Activated naive CD4-positive, alpha-beta T cell treated with anti-CD3 and anti-CD28 coated beads for 36 hours (primary cell): ENCODE measurements at regions of chr10 and their contacts with region 1.

Region 1: GRCh38 chr10:129971381-129972144 is 7.5 kb upstream of the EBF3 start:
- DNase-seq: peak; percentile 62
- H3K4me3 Mint-ChIP-seq: peak overlapping the region; percentile 52
- H3K27ac Mint-ChIP-seq: no peak overlapping the region
- H3K4me1 Mint-ChIP-seq: peaks cover 21% of the 10 kb centered on the region
- H3K27me3 Mint-ChIP-seq: peaks cover 66% of the 10 kb centered on the region

Region 2: DNA sequence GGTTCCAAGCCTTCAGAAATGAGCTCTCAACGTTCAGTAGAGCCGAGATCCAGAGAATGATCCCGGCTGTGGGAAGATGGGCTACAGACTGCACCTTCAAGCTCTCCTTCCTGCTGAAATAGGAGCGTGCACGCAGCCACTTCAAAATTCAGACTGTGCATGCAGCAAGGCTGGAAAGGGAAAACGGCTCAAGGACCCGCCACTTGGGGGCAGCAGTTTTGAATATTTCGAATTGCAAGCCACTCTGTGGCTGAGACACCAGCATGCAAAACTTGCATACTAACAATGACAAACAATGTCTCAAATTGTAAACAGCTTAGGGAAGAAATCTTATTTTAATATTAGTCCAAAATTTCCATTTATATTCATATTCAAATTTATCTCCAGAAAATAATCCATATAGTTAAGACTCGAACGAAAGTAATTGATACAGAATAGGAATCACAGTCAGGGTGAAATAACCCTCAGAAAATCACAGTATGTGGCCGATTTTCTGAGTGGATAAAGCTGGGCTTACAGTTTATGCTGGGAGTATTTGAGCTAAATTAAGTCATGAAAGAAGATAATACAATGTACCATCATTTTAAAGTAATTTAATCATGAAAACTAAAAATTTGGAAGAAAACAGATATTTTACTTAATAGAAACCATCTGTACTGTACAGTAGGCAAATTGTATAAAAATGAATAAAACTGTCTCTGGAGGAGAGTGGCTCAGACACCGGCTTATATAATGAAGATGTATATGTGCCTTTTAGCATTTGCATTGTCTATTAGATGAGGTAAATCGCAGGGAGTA is 1707.5 kb before region 1 on chr10:
- CTCF ChIA-PET with region 1: no interaction called
- intact Hi-C with region 1: loop called (anchors 5 kb)
- DNase-seq: peak; percentile 74
- H3K4me3 Mint-ChIP-seq: no peak overlapping the region
- H3K27ac Mint-ChIP-seq: no peak overlapping the region
- H3K4me1 Mint-ChIP-seq: no peaks in the 10 kb centered on the region
- H3K27me3 Mint-ChIP-seq: peaks cover 30% of the 10 kb centered on the region

Region 3: GRCh38 chr10:129877773-129878371 is 93.7 kb before region 1 on chr10:
- CTCF ChIA-PET with region 1: interaction called, 3 read pairs
- intact Hi-C with region 1: loop called (anchors 5 kb)
- DNase-seq: peak; percentile 61
- H3K4me3 Mint-ChIP-seq: no peak overlapping the region
- H3K27ac Mint-ChIP-seq: no peak overlapping the region
- H3K4me1 Mint-ChIP-seq: no peaks in the 10 kb centered on the region
- H3K27me3 Mint-ChIP-seq: no peaks in the 10 kb centered on the region

Region 4: DNA sequence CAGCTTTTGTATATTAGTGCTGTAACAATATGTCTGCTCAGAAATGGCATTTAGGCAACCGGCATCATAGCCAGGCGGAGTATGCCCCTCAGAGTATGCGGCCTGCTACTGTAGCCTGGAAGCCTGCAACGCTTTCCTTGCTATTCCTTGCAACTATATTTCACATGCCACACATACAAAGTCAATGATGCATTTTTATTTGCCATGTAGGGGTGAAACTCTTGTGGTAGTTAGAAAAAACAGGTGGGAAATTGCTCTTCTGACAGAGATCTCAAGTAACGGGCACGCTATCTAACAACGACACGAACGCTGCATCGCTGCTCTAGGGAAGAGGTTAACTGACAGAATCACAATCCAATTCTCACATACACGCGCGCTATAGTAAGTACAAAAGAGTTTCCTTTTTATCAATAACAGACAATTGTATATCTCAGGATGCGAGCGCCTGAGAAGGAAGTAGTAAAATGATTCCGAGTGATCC is 13.4 kb before region 1 on chr10:
- CTCF ChIA-PET with region 1: interaction called, 5 read pairs
- intact Hi-C with region 1: loop called (anchors 1 kb)
- DNase-seq: no peak
- H3K4me3 Mint-ChIP-seq: peak overlapping the region; percentile 58
- H3K27ac Mint-ChIP-seq: no peak overlapping the region
- H3K4me1 Mint-ChIP-seq: peaks cover 21% of the 10 kb centered on the region
- H3K27me3 Mint-ChIP-seq: peaks cover 68% of the 10 kb centered on the region

Region 5: DNA sequence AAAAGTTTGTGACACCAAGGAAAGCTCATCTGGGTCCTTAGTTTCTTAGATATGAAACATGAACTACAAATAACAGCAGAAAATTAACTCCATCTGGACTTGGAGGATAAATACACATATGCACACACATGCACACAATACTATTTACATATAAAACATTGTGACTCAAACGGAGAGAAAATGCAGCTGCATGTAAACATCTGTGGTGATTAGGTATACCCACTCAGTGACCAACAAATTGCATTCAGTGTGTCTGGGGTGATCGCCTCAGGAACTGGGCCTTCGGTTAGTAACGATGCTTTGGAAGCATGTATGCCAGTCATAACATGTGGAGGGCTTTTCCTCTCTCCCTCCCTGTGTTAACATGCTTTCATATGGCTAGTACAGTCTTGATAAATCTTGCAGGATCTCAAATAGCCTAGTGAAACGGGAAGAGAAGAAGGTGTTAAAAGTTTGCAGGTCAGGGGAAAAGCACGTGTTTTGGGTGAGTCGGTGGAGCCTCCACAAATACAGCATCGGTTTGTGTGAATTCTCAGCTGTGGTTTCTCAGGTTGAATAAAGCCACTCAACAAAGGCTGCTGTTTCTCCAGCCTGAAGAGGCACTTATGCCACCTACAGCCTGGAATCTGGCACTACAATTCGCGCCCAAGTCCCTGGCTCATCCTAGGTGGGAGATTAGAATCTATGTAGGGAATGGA is 155.9 kb after region 1 on chr10:
- CTCF ChIA-PET with region 1: interaction called, 7 read pairs
- intact Hi-C with region 1: loop called (anchors 1 kb)
- DNase-seq: peak; percentile 73
- H3K4me3 Mint-ChIP-seq: no peak overlapping the region
- H3K27ac Mint-ChIP-seq: no peak overlapping the region
- H3K4me1 Mint-ChIP-seq: peaks cover 5% of the 10 kb centered on the region
- H3K27me3 Mint-ChIP-seq: peaks cover 26% of the 10 kb centered on the region